ENCODE measurements at regions of chr18 and their contacts with region 1.

Region 1: GRCh38 chr18:63292831-63293683 is 26.5 kb downstream of the BCL2 start:
- DNase-seq: peak; percentile 81
- ATAC-seq: peak; percentile 80
- H3K4me3 ChIP-seq: peak overlapping the region in 4 of 5 experiments; percentile 18 to 60 (median 46)
- H3K4me3 Mint-ChIP-seq: peak overlapping the region; percentile 79
- H3K27ac ChIP-seq: peak overlapping the region; percentile 94 to 95
- H3K27ac Mint-ChIP-seq: no peak overlapping the region
- H3K4me1 ChIP-seq: peaks cover 74 to 75% of the 10 kb centered on the region in 2 donors
- H3K4me1 Mint-ChIP-seq: peaks cover 62% of the 10 kb centered on the region
- H3K27me3 ChIP-seq: no peaks in the 10 kb centered on the region
- H3K27me3 Mint-ChIP-seq: no peaks in the 10 kb centered on the region
- CTCF ChIP-seq: no peak

Region 2: GRCh38 chr18:63253428-63254372 is 39.4 kb before region 1 on chr18:
- CTCF ChIA-PET with region 1: no interaction called
- POLR2A ChIA-PET with region 1: no interaction called
- intact Hi-C with region 1: loop called (anchors 5 kb)
- DNase-seq: no peak
- ATAC-seq: no peak
- H3K4me3 ChIP-seq: no peak overlapping the region
- H3K4me3 Mint-ChIP-seq: no peak overlapping the region
- H3K27ac ChIP-seq: peak overlapping the region in 1 of 2 donors; percentile 27
- H3K27ac Mint-ChIP-seq: peak overlapping the region; percentile 43
- H3K4me1 ChIP-seq: peaks cover 9 to 19% of the 10 kb centered on the region in 2 donors
- H3K4me1 Mint-ChIP-seq: peaks cover 54% of the 10 kb centered on the region
- H3K27me3 ChIP-seq: no peaks in the 10 kb centered on the region
- H3K27me3 Mint-ChIP-seq: no peaks in the 10 kb centered on the region
- CTCF ChIP-seq: no peak

Region 3: DNA sequence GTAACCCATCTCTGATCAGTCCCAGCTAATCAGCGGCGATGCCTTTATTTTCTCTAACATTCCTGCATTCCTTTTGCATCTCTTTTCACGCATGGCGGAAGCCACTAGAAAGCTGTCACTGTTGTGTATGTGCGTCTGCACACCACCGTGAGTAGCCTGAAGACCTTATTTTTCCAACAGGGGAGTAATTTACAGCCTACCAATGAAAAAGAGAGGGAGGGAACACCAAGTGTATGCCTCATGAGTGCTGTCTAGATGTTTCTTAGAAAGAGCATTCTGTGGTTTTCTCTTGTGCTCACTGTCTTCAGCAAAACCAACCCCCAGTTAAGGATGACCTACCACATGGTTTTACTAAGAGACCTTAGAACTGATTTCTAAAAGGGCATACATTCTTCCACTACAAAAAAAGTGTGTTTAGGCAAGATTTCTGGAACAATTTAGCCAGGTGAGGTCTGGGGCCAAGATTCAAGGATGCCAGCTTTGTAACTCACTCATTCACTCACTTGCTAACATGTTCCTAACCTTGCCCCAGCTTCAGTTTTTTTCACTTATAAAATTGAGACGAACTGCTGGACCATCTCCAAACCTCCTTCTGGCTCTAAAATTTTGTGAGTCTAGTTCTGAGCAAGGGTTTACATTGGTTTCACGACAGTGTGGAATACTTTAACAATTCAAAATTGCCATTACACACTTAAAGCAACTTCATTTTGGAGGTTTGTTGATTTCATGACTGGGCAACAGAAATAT is 24.9 kb before region 1 on chr18:
- CTCF ChIA-PET with region 1: no interaction called
- POLR2A ChIA-PET with region 1: no interaction called
- intact Hi-C with region 1: loop called (anchors 2 kb)
- DNase-seq: no peak
- ATAC-seq: no peak
- H3K4me3 ChIP-seq: no peak overlapping the region
- H3K4me3 Mint-ChIP-seq: no peak overlapping the region
- H3K27ac ChIP-seq: no peak overlapping the region
- H3K27ac Mint-ChIP-seq: peak overlapping the region; percentile 59
- H3K4me1 ChIP-seq: peaks cover 33 to 40% of the 10 kb centered on the region in 2 donors
- H3K4me1 Mint-ChIP-seq: peaks cover 55% of the 10 kb centered on the region
- H3K27me3 ChIP-seq: no peaks in the 10 kb centered on the region
- H3K27me3 Mint-ChIP-seq: no peaks in the 10 kb centered on the region
- CTCF ChIP-seq: no peak

Region 4: GRCh38 chr18:63311118-63312018 is 18.3 kb after region 1 on chr18:
- CTCF ChIA-PET with region 1: interaction called, 10 read pairs
- POLR2A ChIA-PET with region 1: interaction called, 10 read pairs
- intact Hi-C with region 1: loop called (anchors 1 kb)
- DNase-seq: peak; percentile 84
- ATAC-seq: peak; percentile 74
- H3K4me3 ChIP-seq: peak overlapping the region in 4 of 5 experiments; percentile 4 to 98 (median 30)
- H3K4me3 Mint-ChIP-seq: peak overlapping the region; percentile 81
- H3K27ac ChIP-seq: peak overlapping the region; percentile 68 to 92
- H3K27ac Mint-ChIP-seq: peak overlapping the region; percentile 92
- H3K4me1 ChIP-seq: peaks cover 77 to 85% of the 10 kb centered on the region in 2 donors
- H3K4me1 Mint-ChIP-seq: peaks cover 92% of the 10 kb centered on the region
- H3K27me3 ChIP-seq: no peaks in the 10 kb centered on the region
- H3K27me3 Mint-ChIP-seq: no peaks in the 10 kb centered on the region
- CTCF ChIP-seq: no peak

Region 5: DNA sequence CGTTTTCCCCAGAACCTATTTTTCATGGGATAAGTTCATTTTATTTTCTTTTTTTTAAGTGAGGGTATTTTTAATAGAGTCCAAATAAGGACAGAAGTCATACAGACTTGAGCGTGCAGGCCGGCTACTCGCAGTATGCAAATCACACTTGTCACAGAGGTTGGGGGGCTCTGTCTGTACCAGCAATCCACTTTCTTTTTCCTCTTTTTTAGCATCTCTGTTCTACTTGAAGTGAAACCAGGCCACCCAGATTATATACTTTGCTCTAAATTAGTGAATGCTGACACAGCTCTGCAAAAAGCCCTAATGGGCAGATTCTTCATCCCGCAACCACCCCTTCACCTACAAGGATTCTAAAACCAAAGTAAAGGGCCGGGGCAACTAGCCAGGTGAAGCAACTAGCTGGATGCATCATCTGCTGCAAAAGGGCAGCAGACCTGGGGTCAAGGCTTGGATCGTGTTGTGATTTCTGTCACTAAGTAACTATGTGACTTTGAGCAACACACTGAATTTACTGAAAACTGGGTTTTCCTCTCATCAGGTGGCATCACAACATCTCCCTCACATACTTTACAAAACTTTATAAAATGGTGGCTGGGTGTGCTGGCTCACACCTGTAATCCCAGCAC is 55.6 kb after region 1 on chr18:
- CTCF ChIA-PET with region 1: no interaction called
- POLR2A ChIA-PET with region 1: no interaction called
- intact Hi-C with region 1: no loop called
- DNase-seq: peak; percentile 14
- ATAC-seq: peak; percentile 28
- H3K4me3 ChIP-seq: no peak overlapping the region
- H3K4me3 Mint-ChIP-seq: no peak overlapping the region
- H3K27ac ChIP-seq: no peak overlapping the region
- H3K27ac Mint-ChIP-seq: peak overlapping the region; percentile 21
- H3K4me1 ChIP-seq: peaks cover 5 to 7% of the 10 kb centered on the region in 2 donors
- H3K4me1 Mint-ChIP-seq: peaks cover 8% of the 10 kb centered on the region
- H3K27me3 ChIP-seq: no peaks in the 10 kb centered on the region
- H3K27me3 Mint-ChIP-seq: no peaks in the 10 kb centered on the region
- CTCF ChIP-seq: no peak